GM10248 (cell line): ENCODE measurements at regions of chr10 and their contacts with region 1.

Region 1: GRCh38 chr10:87861953-87862678 is 1.2 kb downstream of the KLLN start:
- DNase-seq: peak; percentile 91
- CTCF ChIP-seq: no peak

Region 2: GRCh38 chr10:87850742-87851205 is 11.3 kb before region 1 on chr10:
- CTCF ChIA-PET with region 1: interaction called, 13 read pairs
- POLR2A ChIA-PET with region 1: no interaction called
- DNase-seq: peak; percentile 46
- CTCF ChIP-seq: peak; percentile 51

Region 3: DNA sequence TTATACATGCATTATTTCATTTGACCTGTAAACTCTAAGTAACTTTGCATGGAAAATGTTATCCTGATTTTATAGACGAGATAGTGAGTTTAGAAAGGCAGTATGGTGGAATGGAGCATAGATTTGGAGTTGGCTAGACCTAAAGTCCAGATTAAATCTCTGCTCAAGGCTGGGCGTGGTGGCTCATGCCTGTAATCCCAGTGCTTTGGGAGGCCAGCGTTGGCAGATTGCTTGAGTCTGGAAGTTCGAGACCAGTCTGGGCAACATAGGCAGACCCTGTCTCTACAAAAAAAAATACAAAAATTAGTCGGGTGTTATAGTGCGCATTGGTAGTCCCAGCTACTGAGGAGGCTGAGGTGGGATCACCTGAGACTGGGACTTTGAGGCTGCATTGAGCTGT is 10.7 kb after region 1 on chr10:
- CTCF ChIA-PET with region 1: interaction called, 10 read pairs
- POLR2A ChIA-PET with region 1: interaction called, 4 read pairs
- DNase-seq: no peak
- CTCF ChIP-seq: no peak

Region 4: DNA sequence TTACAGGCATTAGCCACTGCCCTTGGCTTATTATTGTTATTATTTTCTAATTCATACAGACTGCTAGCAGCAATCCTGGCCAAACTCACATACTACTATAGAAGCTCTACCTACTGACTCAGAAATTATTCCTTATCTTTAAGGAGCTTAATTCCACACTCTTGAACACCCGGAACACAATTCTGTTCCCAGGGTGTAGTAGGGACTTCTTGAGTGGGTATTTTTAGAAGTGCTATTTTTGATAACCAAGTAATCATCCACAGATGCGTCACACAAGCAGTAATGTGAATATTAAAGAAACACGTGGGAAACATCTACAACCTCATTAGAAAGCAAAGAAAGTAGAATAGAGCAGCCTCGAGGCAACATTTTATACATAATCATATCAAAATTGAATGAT is 150.5 kb after region 1 on chr10:
- CTCF ChIA-PET with region 1: no interaction called
- POLR2A ChIA-PET with region 1: no interaction called
- DNase-seq: no peak
- CTCF ChIP-seq: no peak

Region 5: GRCh38 chr10:88553116-88553752 is 691.1 kb after region 1 on chr10:
- CTCF ChIA-PET with region 1: interaction called, 13 read pairs
- POLR2A ChIA-PET with region 1: no interaction called
- DNase-seq: peak; percentile 60
- CTCF ChIP-seq: peak; percentile 91